Panc1 (cell line): ENCODE measurements at regions of chr7 and their contacts with region 1.

Region 1: DNA sequence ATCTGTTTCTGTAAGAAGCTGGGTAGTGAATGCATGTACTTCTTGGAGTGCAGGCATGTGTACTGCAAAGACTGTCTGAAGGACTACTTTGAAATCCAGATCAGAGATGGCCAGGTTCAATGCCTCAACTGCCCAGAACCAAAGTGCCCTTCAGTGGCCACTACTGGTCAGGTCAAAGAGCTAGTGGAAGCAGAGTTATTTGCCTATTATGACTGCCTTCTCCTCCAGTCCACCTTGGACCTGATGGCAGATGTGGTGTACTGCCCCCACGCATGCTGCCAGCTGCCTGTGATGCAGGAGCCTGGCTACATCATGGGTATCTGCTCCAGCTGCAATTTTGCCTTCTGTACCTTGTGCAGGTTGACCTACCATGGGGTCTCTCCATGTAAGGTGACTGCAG is 18.9 kb upstream of the TMEM140 start:
- DNase-seq: no peak
- ATAC-seq: no peak
- H3K4me3 ChIP-seq: no peak overlapping the region
- H3K27ac ChIP-seq: no peak overlapping the region
- H3K4me1 ChIP-seq: no peaks in the 10 kb centered on the region
- H3K27me3 ChIP-seq: no peaks in the 10 kb centered on the region
- CTCF ChIP-seq: no peak

Region 2: DNA sequence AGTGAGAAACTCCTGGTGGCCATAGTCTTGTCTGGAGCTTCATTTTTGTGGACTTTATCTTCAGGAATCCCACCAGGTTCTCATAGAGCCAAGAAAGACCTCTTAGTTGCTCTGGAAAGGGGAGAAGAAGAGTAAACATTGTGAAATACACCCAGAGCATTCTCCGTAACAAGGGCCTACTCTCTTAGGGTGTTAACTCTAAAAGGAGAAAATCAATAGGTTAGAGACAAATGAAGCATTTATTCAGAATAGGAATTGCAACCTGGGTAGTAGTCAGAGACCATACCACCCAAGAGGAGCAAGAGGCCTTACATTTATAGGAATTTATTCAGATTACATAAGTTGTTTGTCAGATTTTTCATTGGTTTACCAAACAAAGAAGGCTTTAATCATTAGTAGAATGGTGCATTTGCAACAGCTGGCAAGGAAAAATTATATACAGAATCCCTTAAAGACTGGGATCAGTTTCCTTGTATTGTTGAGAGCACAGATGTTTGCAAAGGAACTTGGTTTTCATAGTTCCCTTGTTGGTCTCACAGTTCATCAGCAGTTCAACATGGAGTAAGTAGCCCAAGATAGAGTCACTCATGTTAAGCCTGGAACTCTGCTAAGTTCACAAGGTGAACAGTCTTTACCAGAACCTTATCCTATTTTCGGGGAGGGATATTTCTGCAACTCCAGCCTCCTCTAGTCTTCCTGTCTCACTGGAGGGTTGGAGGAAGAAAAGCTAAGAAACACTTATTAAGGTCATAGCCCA is 34.3 kb before region 1 on chr7:
- CTCF ChIA-PET with region 1: no interaction called
- POLR2A ChIA-PET with region 1: no interaction called
- in situ Hi-C with region 1: no loop called
- intact Hi-C with region 1: loop called (anchors 1 kb)
- DNase-seq: no peak
- ATAC-seq: no peak
- H3K4me3 ChIP-seq: no peak overlapping the region
- H3K27ac ChIP-seq: no peak overlapping the region
- H3K4me1 ChIP-seq: no peaks in the 10 kb centered on the region
- H3K27me3 ChIP-seq: no peaks in the 10 kb centered on the region
- CTCF ChIP-seq: no peak

Region 3: DNA sequence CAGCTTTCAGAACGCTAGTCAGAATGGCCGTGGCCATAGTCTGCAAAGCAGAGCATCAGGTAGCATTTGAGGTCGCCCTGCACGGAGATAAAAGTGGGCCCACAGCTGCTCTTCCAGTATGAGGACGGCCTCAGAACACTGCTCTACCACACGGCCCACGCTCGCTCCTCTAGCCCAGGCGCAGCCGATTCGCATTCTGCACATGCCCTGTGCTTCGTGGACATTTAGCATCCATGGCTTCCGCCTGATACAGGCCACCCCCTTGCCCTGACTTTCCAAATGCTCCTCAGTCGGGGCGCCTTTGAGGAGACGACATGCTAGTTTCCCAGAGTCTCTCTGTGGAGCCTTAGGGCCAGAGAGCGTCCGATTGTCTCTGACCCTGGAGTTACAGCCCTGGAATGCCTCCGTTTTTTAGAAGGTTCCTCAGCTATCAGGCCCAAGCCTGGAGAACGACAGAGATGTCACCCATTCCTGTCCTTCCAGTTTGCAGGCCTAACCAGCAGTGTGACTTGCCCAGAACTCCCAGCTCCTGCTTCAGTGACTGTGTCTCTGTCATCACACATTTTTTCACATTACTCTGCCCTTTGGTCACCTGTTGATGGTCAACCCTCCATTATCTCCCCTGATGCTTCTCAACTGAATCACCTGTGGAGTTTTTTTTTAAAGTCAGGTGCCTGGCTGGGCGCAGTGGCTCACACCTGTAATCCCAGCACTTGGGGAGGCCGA is 119.0 kb after region 1 on chr7:
- CTCF ChIA-PET with region 1: no interaction called
- POLR2A ChIA-PET with region 1: no interaction called
- in situ Hi-C with region 1: no loop called
- intact Hi-C with region 1: no loop called
- DNase-seq: no peak
- ATAC-seq: no peak
- H3K4me3 ChIP-seq: no peak overlapping the region
- H3K27ac ChIP-seq: no peak overlapping the region
- H3K4me1 ChIP-seq: no peaks in the 10 kb centered on the region
- H3K27me3 ChIP-seq: peaks cover 2% of the 10 kb centered on the region; the same call in 1 of the 2 replicates
- CTCF ChIP-seq: no peak

Region 4: GRCh38 chr7:135260930-135261721 is 132.2 kb after region 1 on chr7:
- CTCF ChIA-PET with region 1: no interaction called
- POLR2A ChIA-PET with region 1: no interaction called
- in situ Hi-C with region 1: no loop called
- intact Hi-C with region 1: no loop called
- DNase-seq: no peak
- ATAC-seq: no peak
- H3K4me3 ChIP-seq: no peak overlapping the region
- H3K27ac ChIP-seq: no peak overlapping the region
- H3K4me1 ChIP-seq: no peaks in the 10 kb centered on the region
- H3K27me3 ChIP-seq: no peaks in the 10 kb centered on the region
- CTCF ChIP-seq: no peak